MCF 10A (cell line): ENCODE measurements at regions of chr12 and their contacts with region 1.

Region 1: GRCh38 chr12:63843721-63844390 is 644 bp upstream of the SRGAP1 start:
- DNase-seq: peak; percentile 92
- H3K4me3 Mint-ChIP-seq: peak overlapping the region; percentile 99
- H3K27ac Mint-ChIP-seq: peak overlapping the region; percentile 96
- H3K4me1 Mint-ChIP-seq: peaks cover 13% of the 10 kb centered on the region
- H3K27me3 Mint-ChIP-seq: no peaks in the 10 kb centered on the region
- CTCF ChIP-seq: peak; percentile 96

Region 2: DNA sequence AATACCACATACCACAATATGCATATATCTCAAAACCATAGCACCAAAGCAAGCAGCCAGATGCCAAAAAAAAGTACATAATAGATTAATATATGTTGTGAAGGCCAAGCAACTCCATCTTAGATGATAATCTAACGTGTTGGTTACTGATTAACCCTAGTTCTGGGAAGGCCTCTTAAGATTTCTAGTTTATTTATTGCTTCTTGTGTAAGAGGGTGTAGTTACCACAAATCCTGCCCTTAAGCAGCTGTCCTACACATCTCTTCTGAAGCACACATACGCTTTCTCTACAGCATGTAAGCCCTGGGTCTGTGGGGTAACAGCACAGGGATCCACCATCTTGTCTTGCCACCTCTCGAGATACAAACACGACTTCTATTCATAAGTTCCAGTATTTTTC is 456.1 kb before region 1 on chr12:
- CTCF ChIA-PET with region 1: no interaction called
- POLR2A ChIA-PET with region 1: no interaction called
- intact Hi-C with region 1: no loop called
- DNase-seq: no peak
- H3K4me3 Mint-ChIP-seq: no peak overlapping the region
- H3K27ac Mint-ChIP-seq: no peak overlapping the region
- H3K4me1 Mint-ChIP-seq: no peaks in the 10 kb centered on the region
- H3K27me3 Mint-ChIP-seq: peaks cover 77% of the 10 kb centered on the region
- CTCF ChIP-seq: no peak

Region 3: GRCh38 chr12:63816031-63816617 is 27.7 kb before region 1 on chr12:
- CTCF ChIA-PET with region 1: no interaction called
- POLR2A ChIA-PET with region 1: no interaction called
- intact Hi-C with region 1: no loop called
- DNase-seq: peak; percentile 24
- H3K4me3 Mint-ChIP-seq: no peak overlapping the region
- H3K27ac Mint-ChIP-seq: no peak overlapping the region
- H3K4me1 Mint-ChIP-seq: no peaks in the 10 kb centered on the region
- H3K27me3 Mint-ChIP-seq: no peaks in the 10 kb centered on the region
- CTCF ChIP-seq: no peak

Region 4: DNA sequence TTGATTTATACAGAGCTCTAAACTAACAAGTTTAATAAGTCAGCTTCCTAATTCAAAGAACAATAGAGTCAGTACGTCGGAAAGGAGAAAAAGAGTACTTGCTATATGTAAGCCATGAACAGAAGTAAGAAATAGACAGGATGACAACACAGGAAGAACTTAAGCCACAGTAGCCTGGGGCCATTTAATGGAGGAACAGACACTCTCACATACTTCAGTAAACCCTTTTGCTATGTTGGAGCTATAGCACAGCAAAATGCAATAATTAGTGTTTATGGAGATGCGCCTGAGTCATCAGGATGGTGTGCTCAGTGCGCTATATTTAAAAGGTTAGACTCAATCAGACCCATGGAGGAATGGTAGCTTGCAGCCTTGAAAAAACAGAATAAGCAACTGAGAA is 61.7 kb after region 1 on chr12:
- CTCF ChIA-PET with region 1: interaction called, 3 read pairs
- POLR2A ChIA-PET with region 1: interaction called, 9 read pairs
- intact Hi-C with region 1: loop called (anchors 2 kb)
- DNase-seq: peak; percentile 89
- H3K4me3 Mint-ChIP-seq: peak overlapping the region; percentile 70
- H3K27ac Mint-ChIP-seq: peak overlapping the region; percentile 92
- H3K4me1 Mint-ChIP-seq: peaks cover 33% of the 10 kb centered on the region
- H3K27me3 Mint-ChIP-seq: no peaks in the 10 kb centered on the region
- CTCF ChIP-seq: no peak

Region 5: DNA sequence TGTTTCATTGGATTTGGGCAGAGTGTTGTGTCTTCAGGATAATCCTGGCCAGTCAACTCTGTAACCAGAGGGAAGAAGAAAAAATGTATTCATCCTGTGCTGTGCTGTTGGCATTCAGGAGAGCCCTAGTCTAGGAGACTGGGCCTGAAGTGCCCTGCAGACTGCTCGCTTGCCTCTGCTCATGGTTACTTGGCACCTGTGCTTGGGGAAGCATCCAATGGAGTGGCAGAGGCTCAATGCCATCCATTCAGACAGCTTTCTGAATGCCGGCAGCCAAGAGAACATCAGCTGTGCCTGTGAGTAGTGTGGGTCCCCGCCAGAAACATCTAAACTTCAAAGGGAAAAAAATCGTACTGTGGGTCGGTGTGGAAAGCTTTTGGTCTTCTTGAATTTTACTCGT is 124.8 kb after region 1 on chr12:
- CTCF ChIA-PET with region 1: interaction called, 14 read pairs
- POLR2A ChIA-PET with region 1: interaction called, 10 read pairs
- intact Hi-C with region 1: no loop called
- DNase-seq: no peak
- H3K4me3 Mint-ChIP-seq: no peak overlapping the region
- H3K27ac Mint-ChIP-seq: peak overlapping the region; percentile 3
- H3K4me1 Mint-ChIP-seq: peaks cover 35% of the 10 kb centered on the region
- H3K27me3 Mint-ChIP-seq: no peaks in the 10 kb centered on the region
- CTCF ChIP-seq: no peak

Region 6: GRCh38 chr12:64077922-64078321 is 234.1 kb after region 1 on chr12:
- CTCF ChIA-PET with region 1: interaction called, 12 read pairs
- POLR2A ChIA-PET with region 1: interaction called, 29 read pairs
- intact Hi-C with region 1: no loop called
- DNase-seq: peak; percentile 28
- H3K4me3 Mint-ChIP-seq: no peak overlapping the region
- H3K27ac Mint-ChIP-seq: no peak overlapping the region
- H3K4me1 Mint-ChIP-seq: peaks cover 18% of the 10 kb centered on the region
- H3K27me3 Mint-ChIP-seq: no peaks in the 10 kb centered on the region
- CTCF ChIP-seq: peak; percentile 17

Region 7: GRCh38 chr12:64105026-64105425 is 261.2 kb after region 1 on chr12:
- CTCF ChIA-PET with region 1: interaction called, 17 read pairs
- POLR2A ChIA-PET with region 1: interaction called, 34 read pairs
- intact Hi-C with region 1: loop called (anchors 1 kb)
- DNase-seq: peak; percentile 34
- H3K4me3 Mint-ChIP-seq: peak overlapping the region; percentile 28
- H3K27ac Mint-ChIP-seq: peak overlapping the region; percentile 88
- H3K4me1 Mint-ChIP-seq: peaks cover 26% of the 10 kb centered on the region
- H3K27me3 Mint-ChIP-seq: no peaks in the 10 kb centered on the region
- CTCF ChIP-seq: no peak

Region 8: GRCh38 chr12:64236549-64236948 is 392.7 kb after region 1 on chr12:
- CTCF ChIA-PET with region 1: interaction called, 14 read pairs
- POLR2A ChIA-PET with region 1: interaction called, 3 read pairs
- intact Hi-C with region 1: no loop called
- DNase-seq: peak; percentile 45
- H3K4me3 Mint-ChIP-seq: no peak overlapping the region
- H3K27ac Mint-ChIP-seq: no peak overlapping the region
- H3K4me1 Mint-ChIP-seq: peaks cover 6% of the 10 kb centered on the region
- H3K27me3 Mint-ChIP-seq: no peaks in the 10 kb centered on the region
- CTCF ChIP-seq: peak; percentile 37